Astrocyte of the cerebellum (primary cell): ENCODE measurements at regions of chr10 and their contacts with region 1.

Region 1: GRCh38 chr10:70241081-70241480 is 7.9 kb upstream of the PPA1 start:
- DNase-seq: no peak
- H3K4me3 ChIP-seq: no peak overlapping the region
- CTCF ChIP-seq: no peak

Region 2: DNA sequence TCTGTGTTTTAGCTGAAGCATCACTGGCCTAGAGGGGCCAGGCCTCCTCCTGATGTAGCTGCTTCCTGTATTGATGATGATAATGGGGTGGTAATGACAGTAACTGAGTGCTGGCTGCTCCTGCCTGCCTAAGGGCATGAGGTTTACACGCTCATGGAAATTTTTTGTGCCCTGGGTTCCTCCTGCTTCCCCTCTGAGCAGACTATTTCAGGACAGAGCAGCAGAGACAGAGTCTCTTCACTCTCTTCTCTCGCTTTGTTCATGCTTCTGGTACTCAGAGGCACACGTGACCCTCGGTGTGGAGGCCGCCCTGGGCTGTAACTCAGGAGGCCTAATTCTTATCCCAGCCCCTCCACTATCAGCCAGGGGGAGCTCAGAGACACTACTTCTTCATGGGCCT is 113.5 kb after region 1 on chr10:
- in situ Hi-C with region 1: loop called (anchors 5 kb)
- DNase-seq: no peak
- H3K4me3 ChIP-seq: no peak overlapping the region
- CTCF ChIP-seq: no peak

Region 3: DNA sequence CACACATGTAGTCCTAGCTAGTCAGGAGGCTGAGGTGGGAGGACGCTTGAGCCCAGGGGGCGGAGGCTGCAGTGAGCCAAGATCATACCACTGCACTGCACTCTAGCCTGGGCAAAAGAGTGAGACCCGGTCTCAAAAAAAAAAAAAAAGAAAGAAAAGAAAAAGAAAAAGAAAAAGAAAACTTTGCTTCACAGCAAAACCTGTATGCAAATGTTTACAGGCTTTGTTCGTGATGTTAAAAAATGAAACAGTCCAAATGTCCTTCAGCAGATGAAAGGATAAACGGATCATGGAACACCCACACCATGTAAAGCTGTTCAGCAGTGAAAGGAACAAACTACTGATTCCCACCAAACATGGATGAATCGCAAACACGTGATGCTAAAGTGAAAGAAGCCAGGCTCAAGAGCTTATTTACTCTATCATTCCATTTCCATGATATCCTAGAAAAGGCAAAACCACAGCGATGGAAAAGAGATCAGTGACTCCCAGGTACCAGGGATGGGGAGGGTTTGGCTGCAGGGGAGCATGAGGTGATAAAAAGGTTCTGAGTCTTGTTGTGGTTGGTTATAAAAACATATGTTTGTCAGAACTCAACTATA is 126.2 kb after region 1 on chr10:
- in situ Hi-C with region 1: no loop called
- DNase-seq: peak; percentile 45
- H3K4me3 ChIP-seq: no peak overlapping the region
- CTCF ChIP-seq: no peak